ENCODE measurements at regions of chr6 and their contacts with region 1.

Region 1: GRCh38 chr6:30571075-30571768 is at the start of gene ABCF1:
- DNase-seq: peak; percentile 99
- ATAC-seq: peak; percentile 98
- H3K4me3 ChIP-seq: peak within 1 kb of the TSS; percentile 69 to 93 (median 87)
- H3K4me3 Mint-ChIP-seq: peak within 1 kb of the TSS; percentile 96
- H3K27ac ChIP-seq: peak within 1 kb of the TSS; percentile 82 to 92
- H3K27ac Mint-ChIP-seq: peak within 1 kb of the TSS; percentile 93
- H3K4me1 ChIP-seq: peaks cover 25 to 32% of the 10 kb centered on the region in 2 donors
- H3K4me1 Mint-ChIP-seq: peaks cover 54% of the 10 kb centered on the region
- H3K27me3 ChIP-seq: no peaks in the 10 kb centered on the region
- H3K27me3 Mint-ChIP-seq: no peaks in the 10 kb centered on the region
- CTCF ChIP-seq: no peak
- total RNA-seq, gene ABCF1: 60.9 and 63.7 TPM in 2 replicates

Region 2: GRCh38 chr6:30020626-30021025 is 550.6 kb before region 1 on chr6:
- CTCF ChIA-PET with region 1: no interaction called
- POLR2A ChIA-PET with region 1: no interaction called
- intact Hi-C with region 1: no loop called
- DNase-seq: peak; percentile 24
- ATAC-seq: no peak
- H3K4me3 ChIP-seq: no peak overlapping the region
- H3K4me3 Mint-ChIP-seq: no peak overlapping the region
- H3K27ac ChIP-seq: no peak overlapping the region
- H3K27ac Mint-ChIP-seq: no peak overlapping the region
- H3K4me1 ChIP-seq: peaks cover 7 to 14% of the 10 kb centered on the region in 2 donors
- H3K4me1 Mint-ChIP-seq: peaks cover 10% of the 10 kb centered on the region
- H3K27me3 ChIP-seq: no peaks in the 10 kb centered on the region
- H3K27me3 Mint-ChIP-seq: no peaks in the 10 kb centered on the region
- CTCF ChIP-seq: no peak

Region 3: GRCh38 chr6:30515932-30516753 is 55.1 kb before region 1 on chr6:
- CTCF ChIA-PET with region 1: no interaction called
- POLR2A ChIA-PET with region 1: no interaction called
- intact Hi-C with region 1: loop called (anchors 1 kb)
- DNase-seq: peak; percentile 95
- ATAC-seq: peak; percentile 85
- H3K4me3 ChIP-seq: peak overlapping the region; percentile 31 to 73 (median 58)
- H3K4me3 Mint-ChIP-seq: peak overlapping the region; percentile 90
- H3K27ac ChIP-seq: peak overlapping the region; percentile 88 to 99
- H3K27ac Mint-ChIP-seq: peak overlapping the region; percentile 99
- H3K4me1 ChIP-seq: peaks cover 34 to 66% of the 10 kb centered on the region in 2 donors
- H3K4me1 Mint-ChIP-seq: peaks cover 60% of the 10 kb centered on the region
- H3K27me3 ChIP-seq: no peaks in the 10 kb centered on the region
- H3K27me3 Mint-ChIP-seq: no peaks in the 10 kb centered on the region
- CTCF ChIP-seq: no peak

Region 4: GRCh38 chr6:30556066-30556905 is 14.9 kb before region 1 on chr6 and contains the start of gene GNL1:
- CTCF ChIA-PET with region 1: interaction called, 4 read pairs
- POLR2A ChIA-PET with region 1: interaction called, 15 read pairs
- intact Hi-C with region 1: loop called (anchors 1 kb)
- DNase-seq: peak; percentile 100
- ATAC-seq: peak; percentile 89
- H3K4me3 ChIP-seq: peak within 1 kb of the TSS; percentile 81 to 100 (median 94)
- H3K4me3 Mint-ChIP-seq: peak within 1 kb of the TSS; percentile 99
- H3K27ac ChIP-seq: peak within 1 kb of the TSS; percentile 91 to 95
- H3K27ac Mint-ChIP-seq: peak within 1 kb of the TSS; percentile 99
- H3K4me1 ChIP-seq: peaks cover 19 to 27% of the 10 kb centered on the region in 2 donors
- H3K4me1 Mint-ChIP-seq: peaks cover 32% of the 10 kb centered on the region
- H3K27me3 ChIP-seq: no peaks in the 10 kb centered on the region
- H3K27me3 Mint-ChIP-seq: no peaks in the 10 kb centered on the region
- CTCF ChIP-seq: no peak
- total RNA-seq, gene GNL1: 107 and 109 TPM in 2 replicates

Region 5: GRCh38 chr6:30590994-30591393 is 19.8 kb after region 1 on chr6:
- CTCF ChIA-PET with region 1: interaction called, 22 read pairs
- POLR2A ChIA-PET with region 1: interaction called, 12 read pairs
- intact Hi-C with region 1: no loop called
- DNase-seq: no peak
- ATAC-seq: no peak
- H3K4me3 ChIP-seq: no peak overlapping the region
- H3K4me3 Mint-ChIP-seq: no peak overlapping the region
- H3K27ac ChIP-seq: no peak overlapping the region
- H3K27ac Mint-ChIP-seq: no peak overlapping the region
- H3K4me1 ChIP-seq: no peaks in the 10 kb centered on the region
- H3K4me1 Mint-ChIP-seq: no peaks in the 10 kb centered on the region
- H3K27me3 ChIP-seq: no peaks in the 10 kb centered on the region
- H3K27me3 Mint-ChIP-seq: no peaks in the 10 kb centered on the region
- CTCF ChIP-seq: no peak

Region 6: DNA sequence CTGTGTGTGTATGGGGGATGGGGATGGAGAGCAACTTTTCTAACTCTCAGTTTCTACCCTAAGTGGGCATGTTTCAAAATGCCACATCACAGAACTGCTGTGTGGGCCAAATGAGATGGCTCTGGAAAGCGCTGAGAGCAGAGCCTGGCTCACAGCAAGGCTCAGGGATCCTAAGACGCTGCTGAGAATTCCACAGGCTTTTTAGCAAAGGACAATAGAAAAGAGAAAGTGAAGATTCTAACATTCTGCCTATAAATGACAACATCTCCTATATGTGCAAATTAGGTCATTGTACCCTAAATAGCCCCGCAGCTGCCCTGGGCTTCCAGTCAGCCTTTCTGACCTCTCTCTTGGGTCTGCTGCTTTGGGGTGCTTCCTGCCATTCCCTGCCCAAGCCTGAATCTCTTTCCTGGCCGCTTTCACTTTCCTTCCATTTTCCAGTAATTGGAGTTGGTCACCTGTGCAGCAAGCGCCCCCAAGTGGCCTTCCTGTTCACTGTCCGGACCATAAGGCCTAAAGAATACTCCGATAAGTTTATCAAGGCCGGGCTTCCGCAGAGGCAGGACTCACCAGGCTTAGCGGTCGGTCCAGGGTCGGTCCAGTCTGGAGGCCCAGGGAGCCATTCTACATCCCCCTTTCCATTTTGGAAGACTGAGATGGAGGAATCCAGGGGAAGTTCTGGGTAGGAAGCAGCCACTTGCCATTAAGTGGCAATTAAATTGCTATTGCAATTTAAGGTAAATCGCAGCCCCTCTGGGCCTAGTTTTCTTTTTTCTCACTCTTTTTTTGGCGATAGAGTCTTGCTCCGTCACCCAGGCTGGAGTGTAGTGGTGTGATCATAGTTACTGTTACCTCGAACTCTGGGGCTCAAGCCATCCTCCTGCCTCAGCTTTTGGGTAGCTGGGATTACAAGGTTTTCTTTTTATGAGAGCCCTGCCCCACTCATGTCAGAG is 306.5 kb after region 1 on chr6:
- CTCF ChIA-PET with region 1: no interaction called
- POLR2A ChIA-PET with region 1: no interaction called
- intact Hi-C with region 1: no loop called
- DNase-seq: peak; percentile 79
- ATAC-seq: peak; percentile 82
- H3K4me3 ChIP-seq: peak overlapping the region in 1 of 5 experiments; percentile 21
- H3K4me3 Mint-ChIP-seq: peak overlapping the region; percentile 48
- H3K27ac ChIP-seq: peak overlapping the region in 1 of 2 donors; percentile 44
- H3K27ac Mint-ChIP-seq: peak overlapping the region; percentile 54
- H3K4me1 ChIP-seq: peaks cover 27 to 28% of the 10 kb centered on the region in 2 donors
- H3K4me1 Mint-ChIP-seq: peaks cover 37% of the 10 kb centered on the region
- H3K27me3 ChIP-seq: no peaks in the 10 kb centered on the region
- H3K27me3 Mint-ChIP-seq: peaks cover 3% of the 10 kb centered on the region
- CTCF ChIP-seq: peak; percentile 82